ENCODE measurements at regions of chr5 and their contacts with region 1.

Region 1: GRCh38 chr5:177006265-177006972 is at the start of gene UIMC1:
- DNase-seq: peak; percentile 93
- ATAC-seq: peak; percentile 93
- H3K4me3 Mint-ChIP-seq: peak within 1 kb of the TSS; percentile 92
- H3K27ac Mint-ChIP-seq: peak within 1 kb of the TSS; percentile 97
- H3K4me1 Mint-ChIP-seq: peaks cover 32% of the 10 kb centered on the region
- H3K27me3 Mint-ChIP-seq: no peaks in the 10 kb centered on the region
- total RNA-seq, gene UIMC1: 50.1 to 56.0 TPM

Region 2: GRCh38 chr5:176944276-176944675 is 62.1 kb before region 1 on chr5:
- CTCF ChIA-PET with region 1: no interaction called
- DNase-seq: no peak
- ATAC-seq: no peak
- H3K4me3 Mint-ChIP-seq: no peak overlapping the region
- H3K27ac Mint-ChIP-seq: no peak overlapping the region
- H3K4me1 Mint-ChIP-seq: no peaks in the 10 kb centered on the region
- H3K27me3 Mint-ChIP-seq: no peaks in the 10 kb centered on the region

Region 3: GRCh38 chr5:176985516-176985915 is 20.9 kb before region 1 on chr5:
- CTCF ChIA-PET with region 1: interaction called, 10 read pairs
- DNase-seq: peak; percentile 74
- ATAC-seq: peak; percentile 83
- H3K4me3 Mint-ChIP-seq: no peak overlapping the region
- H3K27ac Mint-ChIP-seq: peak overlapping the region; percentile 56
- H3K4me1 Mint-ChIP-seq: peaks cover 28% of the 10 kb centered on the region
- H3K27me3 Mint-ChIP-seq: no peaks in the 10 kb centered on the region

Region 4: DNA sequence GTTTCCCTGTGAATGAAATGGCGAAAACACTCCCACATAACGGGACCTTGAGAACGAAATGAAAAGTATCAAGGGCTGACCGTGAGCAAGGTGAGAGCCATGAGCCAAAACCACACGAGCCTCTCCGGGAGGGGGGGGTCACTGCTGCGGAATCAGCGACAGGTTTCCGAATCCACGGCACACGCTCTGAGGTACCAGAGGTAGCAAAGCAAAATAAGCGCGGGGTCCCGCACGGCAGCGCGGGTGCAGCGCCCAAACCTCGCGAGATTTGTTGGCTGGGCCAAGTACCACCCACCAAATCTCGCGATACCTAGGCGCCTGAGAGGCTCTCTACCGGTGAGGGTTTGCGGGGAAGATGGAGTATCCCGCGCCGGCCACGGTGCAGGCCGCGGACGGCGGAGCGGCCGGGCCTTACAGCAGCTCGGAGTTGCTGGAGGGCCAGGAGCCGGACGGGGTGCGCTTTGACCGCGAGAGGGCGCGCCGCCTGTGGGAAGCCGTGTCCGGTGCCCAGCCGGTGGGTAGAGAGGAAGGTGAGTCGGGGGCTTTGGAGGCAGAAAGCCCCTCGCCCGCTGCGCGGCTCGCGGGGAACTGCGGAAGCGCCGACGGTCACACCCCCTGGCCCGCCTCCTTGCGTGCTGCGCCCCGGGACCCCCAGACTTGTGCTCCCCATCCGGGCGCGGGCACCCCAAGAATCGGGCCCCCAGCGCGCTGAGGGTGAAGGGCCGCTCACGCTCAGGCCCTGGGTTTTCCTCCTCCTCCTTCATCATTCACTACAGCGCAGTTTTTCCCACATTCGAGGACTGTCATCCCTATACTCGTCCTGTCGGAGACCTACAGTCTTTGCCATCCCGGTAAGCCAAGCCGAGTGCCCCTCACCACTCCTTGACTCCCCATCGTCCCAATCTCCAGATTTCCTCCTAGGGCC is 16.2 kb after region 1 on chr5 and contains the start of gene ZNF346:
- CTCF ChIA-PET with region 1: interaction called, 23 read pairs
- DNase-seq: peak; percentile 96
- ATAC-seq: peak; percentile 98
- H3K4me3 Mint-ChIP-seq: peak within 1 kb of the TSS; percentile 92
- H3K27ac Mint-ChIP-seq: peak within 1 kb of the TSS; percentile 90
- H3K4me1 Mint-ChIP-seq: peaks cover 34% of the 10 kb centered on the region
- H3K27me3 Mint-ChIP-seq: no peaks in the 10 kb centered on the region
- total RNA-seq, gene ZNF346: 28.8 to 31.2 TPM

Measured in activated CD8-positive, alpha-beta memory T cell treated with anti-CD3 and anti-CD28 coated beads, Interleukin-2, amount 10 ng/mL, durations not matched to agents 7 days and 5 days (primary cell).